Colonic mucosa (tissue), 4 donors: ENCODE measurements at regions of chr5 and their contacts with region 1.

Region 1: GRCh38 chr5:177327539-177328522 is 16.1 kb upstream of the MXD3 start:
- DNase-seq: no peak
- H3K4me3 ChIP-seq: no peak overlapping the region
- H3K27ac ChIP-seq: no peak overlapping the region
- H3K4me1 ChIP-seq: no peaks in the 10 kb centered on the region
- H3K27me3 ChIP-seq: no peaks in the 10 kb centered on the region
- CTCF ChIP-seq: no peak

Region 2: DNA sequence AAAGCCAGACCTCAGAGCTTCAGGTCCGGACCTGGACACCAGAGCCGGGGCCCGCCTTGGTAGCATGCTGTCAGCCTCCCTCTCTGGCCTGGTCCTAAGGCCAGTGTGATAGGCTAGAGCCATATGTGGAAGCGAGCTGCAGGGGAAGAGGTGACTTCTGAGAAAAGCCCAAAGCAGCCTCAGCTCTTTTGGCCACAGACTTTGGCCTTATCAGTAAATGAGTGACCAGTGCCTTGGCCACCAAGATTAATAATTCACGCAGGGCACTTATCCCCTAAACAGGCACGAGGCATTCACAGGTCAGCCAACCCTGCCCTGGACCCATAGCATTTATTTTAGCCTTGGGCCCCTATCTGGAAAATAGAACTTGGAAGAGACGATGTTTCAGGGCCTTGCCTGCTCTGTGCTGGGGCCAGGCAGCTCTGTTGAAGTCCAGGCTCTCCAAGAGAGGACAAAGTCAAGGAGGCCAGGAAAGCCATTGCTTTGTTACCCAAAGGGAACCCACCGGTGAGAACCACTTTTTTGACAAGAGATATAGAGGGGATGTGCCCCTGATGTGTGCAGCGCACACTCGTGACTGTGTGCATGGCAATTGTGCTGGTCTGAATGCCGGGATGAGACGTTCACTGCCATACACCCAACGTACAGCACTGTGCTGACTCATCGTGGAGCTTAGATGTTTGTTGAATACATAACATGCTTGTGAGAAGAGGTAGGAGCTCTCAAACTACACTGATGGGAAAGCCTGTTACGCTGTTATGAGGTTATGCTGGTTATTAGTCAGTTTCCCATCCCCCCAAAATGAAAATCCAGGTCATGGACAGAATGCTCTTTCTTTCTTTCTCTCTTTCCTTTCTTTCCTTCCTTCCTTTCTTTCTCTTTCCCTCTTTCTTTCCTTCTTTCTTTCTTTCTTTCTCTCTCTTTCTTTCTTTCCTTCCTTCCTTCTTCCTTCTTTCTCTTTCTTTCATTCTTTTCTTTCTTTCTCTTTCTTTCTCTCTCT is 51.4 kb after region 1 on chr5:
- intact Hi-C with region 1: loop called (anchors 5 kb)
- DNase-seq: no peak
- H3K4me3 ChIP-seq: no peak overlapping the region
- H3K27ac ChIP-seq: no peak overlapping the region
- H3K4me1 ChIP-seq: no peaks in the 10 kb centered on the region
- H3K27me3 ChIP-seq: no peaks in the 10 kb centered on the region
- CTCF ChIP-seq: no peak

Region 3: GRCh38 chr5:177554474-177555111 is 226.8 kb after region 1 on chr5 and contains the start of gene FAM193B:
- intact Hi-C with region 1: no loop called
- DNase-seq: peak; percentile 97
- H3K4me3 ChIP-seq: peak within 1 kb of the TSS; percentile 97
- H3K27ac ChIP-seq: peak within 1 kb of the TSS; percentile 69
- H3K4me1 ChIP-seq: peaks cover 3% of the 10 kb centered on the region
- H3K27me3 ChIP-seq: no peaks in the 10 kb centered on the region
- CTCF ChIP-seq: no peak
- total RNA-seq, gene FAM193B: 39.4 to 78.6 TPM